GM13976 (cell line): ENCODE measurements at regions of chr5 and their contacts with region 1.

Region 1: DNA sequence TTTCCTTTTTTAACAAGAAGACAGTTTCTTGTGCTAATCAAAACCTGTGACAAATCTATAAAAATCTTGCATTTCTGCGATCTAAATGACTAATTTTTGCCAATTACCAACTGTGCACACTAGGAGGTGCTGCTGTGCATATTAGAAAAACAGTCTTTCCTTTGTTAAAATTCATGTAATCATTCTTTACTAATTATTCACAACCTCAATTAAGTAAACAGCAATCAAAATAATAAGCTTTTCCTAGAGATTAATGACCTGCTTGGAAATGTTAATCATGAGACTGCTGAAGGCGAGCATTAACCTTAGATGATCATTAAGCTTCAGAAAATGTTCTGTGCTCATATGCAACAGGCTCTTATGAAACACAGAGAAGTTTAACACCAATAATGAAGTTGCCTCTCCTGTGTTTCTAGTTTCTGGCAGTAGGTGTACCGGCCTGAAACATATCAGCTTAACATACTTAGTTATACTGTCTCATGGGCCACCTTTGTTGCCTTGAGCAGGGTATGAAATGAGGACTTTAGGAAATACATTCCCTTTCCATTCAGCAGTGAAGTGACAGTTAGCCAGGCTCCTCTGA is 17.7 kb downstream of the RFESD start:
- DNase-seq: no peak
- CTCF ChIP-seq: peak; percentile 57

Region 2: DNA sequence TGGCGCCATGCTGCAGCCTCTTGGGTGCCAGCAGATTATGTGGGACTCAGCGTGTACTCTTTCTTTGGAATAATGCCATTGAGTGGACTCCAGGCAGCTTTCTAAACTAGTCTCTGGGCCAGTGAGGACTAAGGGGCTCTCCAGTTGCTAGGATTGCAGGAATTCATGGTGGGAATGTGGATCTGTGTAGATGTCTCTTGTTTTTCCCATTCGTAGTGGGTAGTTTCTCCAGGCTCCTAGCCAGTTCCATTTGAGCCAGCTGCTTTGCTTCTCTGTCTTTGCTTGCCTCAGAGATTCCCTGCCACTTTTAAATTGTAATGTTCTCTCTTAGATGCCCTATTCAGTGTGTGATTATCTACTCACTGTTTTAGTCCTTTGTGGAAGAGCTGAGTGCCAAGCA is 1003.2 kb before region 1 on chr5:
- in situ Hi-C with region 1: no loop called
- DNase-seq: no peak
- CTCF ChIP-seq: no peak

Region 3: GRCh38 chr5:95773335-95774059 is 109.2 kb after region 1 on chr5:
- in situ Hi-C with region 1: loop called (anchors 10 kb)
- DNase-seq: no peak
- CTCF ChIP-seq: no peak

Region 4: GRCh38 chr5:95846554-95847260 is 182.4 kb after region 1 on chr5:
- in situ Hi-C with region 1: loop called (anchors 10 kb)
- DNase-seq: peak; percentile 75
- CTCF ChIP-seq: peak; percentile 89

Region 5: GRCh38 chr5:96049398-96050272 is 385.3 kb after region 1 on chr5:
- in situ Hi-C with region 1: no loop called
- DNase-seq: no peak
- CTCF ChIP-seq: no peak

Region 6: DNA sequence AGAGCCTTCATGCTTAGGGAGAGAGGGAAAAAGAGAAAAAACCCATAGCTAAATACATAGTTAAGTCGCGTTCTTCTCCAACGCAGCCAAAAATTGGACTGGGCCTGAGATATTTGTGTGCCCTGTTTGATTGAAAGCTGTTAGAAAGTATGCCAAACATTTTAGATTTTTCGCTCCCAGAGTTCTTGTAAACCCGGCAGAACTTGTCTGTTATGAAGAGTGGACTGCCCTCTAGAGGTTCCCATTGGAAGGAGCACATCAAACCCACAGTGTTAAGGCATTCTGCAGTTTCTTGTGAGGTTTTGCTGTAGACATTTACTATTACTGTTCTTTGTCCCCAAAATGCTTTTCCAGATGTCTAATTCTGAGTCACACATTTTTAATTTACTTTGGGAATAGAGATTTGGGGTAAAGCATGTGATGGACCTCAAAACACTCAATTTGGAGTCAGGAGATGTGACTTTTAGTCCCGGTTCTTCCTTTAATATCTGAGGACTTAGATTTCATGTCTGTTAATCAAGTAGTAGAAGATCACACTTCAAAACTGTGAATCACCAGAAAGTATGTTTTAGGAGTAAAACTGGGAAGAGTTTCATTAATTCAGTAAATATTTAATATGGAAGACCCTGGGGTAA is 672.2 kb after region 1 on chr5:
- in situ Hi-C with region 1: loop called (anchors 25 kb)
- DNase-seq: peak; percentile 38
- CTCF ChIP-seq: peak; percentile 75